ENCODE measurements at regions of chr3 and their contacts with region 1.

Region 1: DNA sequence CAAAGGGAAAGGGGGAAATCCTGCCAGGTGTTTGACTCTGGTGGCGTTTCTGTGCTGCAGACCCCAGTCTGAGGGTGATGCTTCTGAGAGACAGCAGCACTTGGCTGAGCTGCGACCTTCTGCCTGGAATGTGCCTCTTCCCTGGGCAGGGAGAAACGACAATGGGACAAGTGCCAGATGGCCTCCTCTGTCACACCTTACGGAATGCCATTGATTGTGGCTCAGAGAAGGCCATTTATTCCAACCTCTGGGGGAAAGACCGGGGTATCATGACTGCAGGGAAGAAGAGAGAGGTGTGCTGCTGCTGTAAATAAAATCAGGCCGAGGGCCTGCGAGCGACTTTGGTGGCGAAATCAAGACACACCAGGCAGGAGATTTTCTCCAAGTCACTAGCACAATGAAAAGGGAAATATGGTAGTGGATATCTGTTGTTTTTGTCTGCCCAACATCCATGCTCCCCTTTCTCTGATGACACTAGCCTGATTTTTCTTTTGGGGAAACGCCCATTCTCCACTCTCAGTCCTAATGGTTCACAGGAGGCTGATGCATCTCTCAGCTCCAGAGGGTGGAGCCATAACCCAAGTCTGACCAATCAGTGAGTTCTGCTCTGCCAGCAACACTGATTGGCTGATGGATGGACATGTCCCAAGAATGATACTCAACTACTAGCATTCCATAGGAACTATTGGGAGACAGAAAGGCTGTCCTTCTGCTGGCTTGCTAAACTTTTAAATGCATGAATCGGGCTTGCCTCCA is 336.1 kb downstream of the FOXP1 start:
- DNase-seq: peak; percentile 61
- H3K4me3 ChIP-seq: no peak overlapping the region
- H3K27ac ChIP-seq: no peak overlapping the region
- H3K4me1 ChIP-seq: no peaks in the 10 kb centered on the region
- H3K27me3 ChIP-seq: no peaks in the 10 kb centered on the region
- CTCF ChIP-seq: no peak

Region 2: GRCh38 chr3:71389911-71390573 is 142.6 kb after region 1 on chr3:
- CTCF ChIA-PET with region 1: no interaction called
- dilution Hi-C with region 1: no loop called
- in situ Hi-C with region 1: no loop called
- intact Hi-C with region 1: loop called (anchors 10 kb)
- DNase-seq: peak; percentile 38
- H3K4me3 ChIP-seq: no peak overlapping the region
- H3K27ac ChIP-seq: no peak overlapping the region
- H3K4me1 ChIP-seq: peaks cover 10% of the 10 kb centered on the region
- H3K27me3 ChIP-seq: no peaks in the 10 kb centered on the region
- CTCF ChIP-seq: no peak